ENCODE measurements at regions of chr1 and their contacts with region 1.

Region 1: GRCh38 chr1:71027991-71028390 is 19.6 kb downstream of the PTGER3 start:
- DNase-seq: no peak
- ATAC-seq: no peak
- H3K4me3 ChIP-seq: no peak overlapping the region
- H3K27ac ChIP-seq: no peak overlapping the region
- H3K4me1 ChIP-seq: no peaks in the 10 kb centered on the region
- H3K27me3 ChIP-seq: peaks cover 0 to 13% (median 0%) of the 10 kb centered on the region in 9 donors
- CTCF ChIP-seq: no peak
- POLR2A ChIP-seq: no peak

Region 2: DNA sequence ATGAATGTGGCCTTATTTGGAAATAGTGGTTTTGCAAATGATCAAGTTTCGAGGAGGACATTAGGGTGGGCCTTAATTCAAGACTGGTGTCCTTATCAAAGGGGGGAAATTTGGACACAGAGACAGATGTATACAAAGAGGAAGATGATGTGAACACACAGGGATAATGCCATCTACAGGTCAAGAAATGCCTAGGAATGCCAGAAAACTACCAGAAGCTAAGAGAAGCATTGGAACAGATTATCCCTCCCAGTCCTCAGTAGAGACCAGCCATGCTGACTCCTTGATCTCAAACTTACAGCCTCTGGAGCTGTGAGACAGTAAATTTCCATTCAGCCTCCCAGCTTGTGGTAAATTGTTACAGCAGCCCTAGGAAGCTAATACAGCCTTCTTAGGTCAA is 131.8 kb before region 1 on chr1:
- intact Hi-C with region 1: loop called in 1 of 10 experiments (anchors 10 kb)
- DNase-seq: no peak
- ATAC-seq: no peak
- H3K4me3 ChIP-seq: no peak overlapping the region
- H3K27ac ChIP-seq: no peak overlapping the region
- H3K4me1 ChIP-seq: peaks cover 0 to 18% (median 5%) of the 10 kb centered on the region in 12 donors
- H3K27me3 ChIP-seq: no peaks in the 10 kb centered on the region
- CTCF ChIP-seq: peak in 4 of 12 donors; percentile 8 to 23 (median 18)
- POLR2A ChIP-seq: no peak